Activated CD4-positive, alpha-beta T cell treated with anti-CD3 and anti-CD28 coated beads for 36 hours (primary cell): ENCODE measurements at regions of chr6 and their contacts with region 1.

Region 1: GRCh38 chr6:137415127-137415833 is 78.9 kb downstream of the OLIG3 start:
- DNase-seq: peak; percentile 77
- ATAC-seq: peak; percentile 95
- H3K4me3 Mint-ChIP-seq: peak overlapping the region; percentile 65
- H3K27ac Mint-ChIP-seq: peak overlapping the region; percentile 58
- H3K4me1 Mint-ChIP-seq: peaks cover 12% of the 10 kb centered on the region
- H3K27me3 Mint-ChIP-seq: peaks cover 2% of the 10 kb centered on the region

Region 2: DNA sequence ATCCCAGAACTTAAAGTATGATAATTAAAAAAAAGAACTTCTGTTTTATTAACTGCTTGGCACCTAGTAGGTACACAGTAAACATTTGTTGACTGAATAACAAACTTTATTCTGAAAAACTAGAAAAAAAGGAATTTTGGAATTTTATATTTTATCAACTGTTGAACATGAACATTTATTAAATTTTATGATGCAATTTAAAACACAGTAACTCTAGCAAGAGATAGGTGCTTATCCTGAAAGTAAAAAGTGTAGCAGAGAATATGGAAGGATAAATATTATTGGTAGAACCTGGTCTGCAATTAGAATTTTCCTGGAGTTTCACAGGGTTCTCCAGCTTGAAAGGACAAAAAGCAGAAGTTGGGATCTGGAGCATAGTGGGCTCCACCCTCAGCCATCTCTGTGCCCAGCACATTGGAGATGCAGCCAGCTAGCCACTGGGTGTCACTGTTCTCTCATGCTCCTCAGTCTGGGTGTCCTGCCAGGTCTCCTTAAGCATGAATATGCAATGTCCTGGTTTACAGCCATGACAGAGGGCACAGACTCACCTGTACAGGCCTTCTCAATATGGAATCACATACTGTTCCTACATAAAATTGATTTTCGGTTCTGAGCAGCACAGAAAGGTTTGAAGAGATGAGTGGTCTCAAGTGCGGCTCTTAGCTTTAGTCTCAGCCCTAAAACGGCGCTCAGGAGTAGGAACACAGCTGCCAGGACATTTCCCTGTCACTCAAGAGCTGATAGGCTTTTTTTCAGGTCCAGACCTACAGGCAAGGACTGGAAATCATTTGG is 338.8 kb before region 1 on chr6:
- CTCF ChIA-PET with region 1: no interaction called
- POLR2A ChIA-PET with region 1: no interaction called
- intact Hi-C with region 1: loop called in 1 of 2 experiments (anchors 5 kb)
- DNase-seq: peak; percentile 78
- ATAC-seq: peak; percentile 92
- H3K4me3 Mint-ChIP-seq: no peak overlapping the region
- H3K27ac Mint-ChIP-seq: no peak overlapping the region
- H3K4me1 Mint-ChIP-seq: no peaks in the 10 kb centered on the region
- H3K27me3 Mint-ChIP-seq: peaks cover 27% of the 10 kb centered on the region

Region 3: DNA sequence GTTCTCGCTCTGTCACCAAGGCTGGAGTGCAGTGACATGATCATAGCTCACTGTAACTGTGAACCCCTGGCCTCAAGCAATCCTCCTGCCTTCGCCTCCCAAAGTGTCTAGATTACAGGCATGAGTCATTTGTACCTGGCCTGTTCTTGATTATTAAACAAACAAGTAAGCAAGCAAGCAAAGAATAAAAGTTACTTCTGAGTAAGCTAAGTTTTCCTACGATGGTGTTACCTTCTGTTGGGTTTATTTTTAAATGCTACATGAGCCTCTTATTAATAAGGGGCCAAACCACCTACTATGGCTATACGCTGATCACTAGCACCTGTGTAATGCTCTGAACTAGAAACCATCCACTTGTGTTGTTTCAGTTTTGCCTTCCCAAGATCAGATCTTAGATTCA is 292.7 kb before region 1 on chr6:
- CTCF ChIA-PET with region 1: no interaction called
- POLR2A ChIA-PET with region 1: no interaction called
- intact Hi-C with region 1: no loop called
- DNase-seq: no peak
- ATAC-seq: no peak
- H3K4me3 Mint-ChIP-seq: no peak overlapping the region
- H3K27ac Mint-ChIP-seq: no peak overlapping the region
- H3K4me1 Mint-ChIP-seq: no peaks in the 10 kb centered on the region
- H3K27me3 Mint-ChIP-seq: peaks cover 2% of the 10 kb centered on the region

Region 4: GRCh38 chr6:137271245-137272183 is 143.8 kb before region 1 on chr6:
- CTCF ChIA-PET with region 1: interaction called, 11 read pairs
- POLR2A ChIA-PET with region 1: no interaction called
- intact Hi-C with region 1: loop called (anchors 2 kb)
- DNase-seq: no peak
- ATAC-seq: peak; percentile 51
- H3K4me3 Mint-ChIP-seq: no peak overlapping the region
- H3K27ac Mint-ChIP-seq: no peak overlapping the region
- H3K4me1 Mint-ChIP-seq: peaks cover 3% of the 10 kb centered on the region
- H3K27me3 Mint-ChIP-seq: peaks cover 8% of the 10 kb centered on the region

Region 5: DNA sequence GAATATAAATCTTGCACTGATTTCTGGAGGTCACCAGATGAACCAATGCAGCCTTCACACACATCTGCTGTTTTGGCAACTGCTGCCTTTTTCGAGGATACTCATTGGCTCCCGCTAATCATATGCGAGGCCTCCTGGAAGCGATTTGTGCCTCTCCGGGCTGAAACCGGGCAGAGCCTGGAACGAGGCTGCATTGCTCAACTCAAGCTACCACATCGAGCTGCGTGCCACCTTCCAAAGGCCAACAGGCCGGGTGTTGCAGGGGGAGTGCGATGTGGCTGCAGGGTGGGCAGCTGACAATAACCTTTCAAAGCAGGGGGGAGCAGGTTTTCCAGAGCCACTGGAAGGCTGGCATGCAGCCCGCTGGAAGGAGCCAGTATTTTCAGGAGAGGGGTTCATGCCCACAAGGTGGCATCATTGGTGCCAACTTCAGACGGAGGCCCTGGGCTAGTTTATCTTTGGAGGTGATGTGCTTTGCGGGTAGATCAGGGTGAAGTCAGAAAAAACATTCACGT is 73.5 kb before region 1 on chr6:
- CTCF ChIA-PET with region 1: interaction called, 15 read pairs
- POLR2A ChIA-PET with region 1: no interaction called
- intact Hi-C with region 1: loop called (anchors 1 kb)
- DNase-seq: peak; percentile 60
- ATAC-seq: peak; percentile 47
- H3K4me3 Mint-ChIP-seq: peak overlapping the region; percentile 19
- H3K27ac Mint-ChIP-seq: no peak overlapping the region
- H3K4me1 Mint-ChIP-seq: peaks cover 7% of the 10 kb centered on the region
- H3K27me3 Mint-ChIP-seq: peaks cover 7% of the 10 kb centered on the region

Region 6: GRCh38 chr6:138773177-138774091 is 1358.2 kb after region 1 on chr6 and contains the start of gene CCDC28A:
- CTCF ChIA-PET with region 1: no interaction called
- POLR2A ChIA-PET with region 1: no interaction called
- intact Hi-C with region 1: no loop called
- DNase-seq: peak; percentile 95
- ATAC-seq: peak; percentile 91
- H3K4me3 Mint-ChIP-seq: peak within 1 kb of the TSS; percentile 84
- H3K27ac Mint-ChIP-seq: peak within 1 kb of the TSS; percentile 98
- H3K4me1 Mint-ChIP-seq: peaks cover 31% of the 10 kb centered on the region
- H3K27me3 Mint-ChIP-seq: no peaks in the 10 kb centered on the region
- total RNA-seq, gene CCDC28A: 14.8 to 16.8 TPM